ENCODE measurements at regions of chr20 and their contacts with region 1.

Region 1: GRCh38 chr20:5191829-5192569 is 65.2 kb downstream of the CDS2 start:
- DNase-seq: no peak
- H3K4me3 ChIP-seq: no peak overlapping the region
- CTCF ChIP-seq: peak; percentile 63

Region 2: DNA sequence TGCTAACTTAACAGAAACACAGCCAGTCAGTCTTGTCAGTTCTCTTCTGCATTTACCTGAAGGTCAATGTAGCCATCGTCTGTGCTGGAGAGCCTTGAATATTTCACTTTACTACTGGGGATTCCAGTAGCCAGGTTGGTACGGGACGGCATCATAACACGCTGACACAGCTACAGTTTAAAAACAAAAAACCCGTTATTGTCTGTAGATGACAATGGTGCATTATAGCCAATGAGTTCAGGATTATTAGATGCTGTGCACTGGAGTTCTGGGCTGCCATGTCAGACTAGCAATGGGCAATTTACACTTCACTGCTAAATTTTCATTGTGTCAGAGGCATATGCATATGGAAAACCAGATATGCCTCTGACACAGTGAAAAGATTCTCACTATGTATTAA is 82.7 kb before region 1 on chr20:
- CTCF ChIA-PET with region 1: interaction called, 10 read pairs
- POLR2A ChIA-PET with region 1: no interaction called
- DNase-seq: no peak
- H3K4me3 ChIP-seq: no peak overlapping the region
- CTCF ChIP-seq: no peak

Region 3: GRCh38 chr20:5126512-5127203 is 65.3 kb before region 1 on chr20 and contains the start of gene CDS2:
- CTCF ChIA-PET with region 1: interaction called, 372 read pairs
- POLR2A ChIA-PET with region 1: interaction called, 9 read pairs
- DNase-seq: peak; percentile 82
- H3K4me3 ChIP-seq: peak within 1 kb of the TSS; percentile 80
- CTCF ChIP-seq: peak; percentile 88

Region 4: GRCh38 chr20:5156675-5157448 is 35.1 kb before region 1 on chr20:
- CTCF ChIA-PET with region 1: interaction called, 25 read pairs
- POLR2A ChIA-PET with region 1: no interaction called
- DNase-seq: no peak
- H3K4me3 ChIP-seq: no peak overlapping the region
- CTCF ChIP-seq: no peak

Region 5: DNA sequence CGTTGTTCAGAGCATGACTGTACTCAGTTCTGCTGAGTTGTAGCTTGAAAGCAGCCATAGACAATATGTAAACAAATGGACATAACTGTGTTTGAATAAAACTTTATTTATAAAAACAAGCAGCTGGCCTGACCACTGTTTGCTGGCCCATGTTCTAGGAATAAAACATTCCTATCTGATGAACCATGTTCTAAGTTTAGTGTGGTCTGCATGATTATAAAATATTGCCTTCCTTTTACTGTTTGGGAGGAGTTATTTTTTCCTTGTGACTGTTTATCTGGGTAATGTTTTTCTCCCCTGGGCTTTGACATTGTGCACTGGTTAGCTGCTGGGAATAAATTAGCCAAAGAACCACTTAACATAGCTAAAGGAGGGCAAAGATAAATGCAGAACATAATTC is 10.0 kb before region 1 on chr20:
- CTCF ChIA-PET with region 1: interaction called, 20 read pairs
- POLR2A ChIA-PET with region 1: no interaction called
- DNase-seq: no peak
- H3K4me3 ChIP-seq: no peak overlapping the region
- CTCF ChIP-seq: no peak

Region 6: GRCh38 chr20:5215672-5216304 is 23.8 kb after region 1 on chr20:
- CTCF ChIA-PET with region 1: interaction called, 22 read pairs
- POLR2A ChIA-PET with region 1: no interaction called
- DNase-seq: no peak
- H3K4me3 ChIP-seq: no peak overlapping the region
- CTCF ChIP-seq: no peak

Measured in AG04449 (cell line).